ENCODE measurements at regions of chr22 and their contacts with region 1.

Region 1: GRCh38 chr22:49960159-49961004 is at the start of gene PIM3:
- DNase-seq: peak; percentile 94
- H3K4me3 Mint-ChIP-seq: peak within 1 kb of the TSS; percentile 91
- H3K27ac Mint-ChIP-seq: peak within 1 kb of the TSS; percentile 94
- H3K4me1 Mint-ChIP-seq: peaks cover 23% of the 10 kb centered on the region
- H3K27me3 Mint-ChIP-seq: no peaks in the 10 kb centered on the region
- total RNA-seq, gene PIM3: 202 to 210 TPM

Region 2: GRCh38 chr22:49936018-49936952 is 24.1 kb before region 1 on chr22:
- CTCF ChIA-PET with region 1: interaction called, 4 read pairs
- intact Hi-C with region 1: loop called (anchors 1 kb)
- DNase-seq: peak; percentile 99
- H3K4me3 Mint-ChIP-seq: peak overlapping the region; percentile 57
- H3K27ac Mint-ChIP-seq: peak overlapping the region; percentile 90
- H3K4me1 Mint-ChIP-seq: peaks cover 33% of the 10 kb centered on the region
- H3K27me3 Mint-ChIP-seq: no peaks in the 10 kb centered on the region

Region 3: GRCh38 chr22:49948958-49949913 is 11.1 kb before region 1 on chr22:
- CTCF ChIA-PET with region 1: interaction called, 4 read pairs
- intact Hi-C with region 1: loop called (anchors 1 kb)
- DNase-seq: no peak
- H3K4me3 Mint-ChIP-seq: no peak overlapping the region
- H3K27ac Mint-ChIP-seq: no peak overlapping the region
- H3K4me1 Mint-ChIP-seq: peaks cover 6% of the 10 kb centered on the region
- H3K27me3 Mint-ChIP-seq: no peaks in the 10 kb centered on the region

Region 4: DNA sequence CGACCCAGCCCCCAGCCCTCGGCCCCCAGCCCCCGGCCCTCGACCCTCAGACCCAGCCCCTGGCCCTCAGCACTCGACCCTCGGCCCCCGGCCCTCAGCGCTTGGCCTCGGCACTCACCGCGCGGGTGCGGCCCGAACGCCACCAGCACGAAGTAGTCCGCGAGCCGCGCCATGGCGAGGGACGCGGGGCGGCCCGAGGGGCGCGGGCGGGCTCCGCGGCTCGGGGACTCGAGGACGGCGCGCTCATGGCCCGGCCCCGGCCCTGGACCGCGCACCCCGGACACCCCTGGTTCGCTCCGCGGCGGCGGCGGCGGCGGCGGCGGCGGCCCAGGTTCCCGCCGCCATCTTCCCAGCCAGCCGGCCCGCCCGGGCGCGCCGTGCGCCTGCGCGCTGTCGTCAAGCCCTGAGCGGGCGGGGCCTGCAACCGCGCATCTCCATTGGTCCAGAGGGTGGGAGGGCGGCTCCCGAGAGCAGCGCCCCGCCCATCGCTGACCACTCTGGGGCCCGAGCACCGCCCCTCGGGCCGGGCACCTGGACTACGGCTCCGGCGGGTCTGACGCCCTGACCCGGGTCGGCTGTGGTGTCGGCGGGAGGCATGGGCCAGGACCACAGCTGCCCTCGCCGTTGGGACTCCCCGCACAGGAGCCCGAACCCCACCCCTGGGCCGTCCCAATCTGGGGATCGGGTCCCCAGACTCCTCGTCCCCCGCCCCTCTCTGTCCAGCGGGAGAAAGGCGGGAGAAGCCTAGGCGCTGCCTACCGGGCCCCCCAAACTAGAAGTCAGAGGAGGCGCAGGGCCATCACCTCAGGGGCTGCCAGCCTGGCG is 514.5 kb after region 1 on chr22 and contains the start of gene SBF1:
- CTCF ChIA-PET with region 1: no interaction called
- intact Hi-C with region 1: loop called (anchors 5 kb)
- DNase-seq: peak; percentile 90
- H3K4me3 Mint-ChIP-seq: peak within 1 kb of the TSS; percentile 95
- H3K27ac Mint-ChIP-seq: peak within 1 kb of the TSS; percentile 87
- H3K4me1 Mint-ChIP-seq: peaks cover 46% of the 10 kb centered on the region
- H3K27me3 Mint-ChIP-seq: peaks cover 3% of the 10 kb centered on the region
- total RNA-seq, gene SBF1: 100 TPM